ENCODE measurements at regions of chr15 and their contacts with region 1.

Region 1: DNA sequence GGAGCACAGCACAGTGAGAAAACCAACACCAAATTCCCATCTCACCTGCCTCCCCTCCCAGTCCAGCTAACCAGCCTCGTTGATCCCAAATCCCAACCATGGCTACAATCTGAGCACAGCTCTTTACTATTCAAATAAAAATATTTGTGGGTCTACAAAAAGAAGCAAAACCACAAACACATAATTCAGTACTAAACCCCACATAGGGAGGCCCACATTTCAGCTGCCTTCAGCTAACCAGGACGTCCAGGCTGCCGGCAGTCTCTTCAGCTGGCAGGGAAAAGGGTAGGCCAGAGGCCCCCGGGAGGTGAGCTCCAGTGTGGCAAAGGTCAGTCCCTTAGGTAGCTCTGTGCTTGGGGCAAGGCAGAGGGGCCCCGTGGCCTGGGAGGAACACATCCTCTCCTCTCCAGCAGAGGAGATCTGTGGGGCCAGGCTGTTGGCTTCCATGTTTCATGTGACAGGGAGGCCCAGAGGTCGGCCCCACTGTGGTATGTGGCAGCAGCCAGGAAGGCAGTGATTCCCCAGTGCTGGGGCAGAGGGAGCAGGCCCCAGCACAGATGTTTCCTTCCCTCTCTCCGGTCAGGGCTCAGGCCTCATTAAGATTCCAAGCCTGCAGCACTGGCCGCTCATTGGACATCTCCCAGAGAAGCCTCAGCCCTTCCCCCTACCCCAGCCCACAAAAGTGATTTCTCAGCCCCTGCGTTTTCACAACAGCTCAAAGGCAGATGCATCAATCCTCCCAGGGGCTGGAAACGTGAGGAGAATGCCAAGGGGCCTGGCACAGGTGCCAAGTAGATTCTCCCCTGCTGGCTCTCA is 381.4 kb downstream of the NTRK3 start:
- DNase-seq: no peak
- H3K4me3 ChIP-seq: no peak overlapping the region
- H3K27ac ChIP-seq: no peak overlapping the region
- H3K4me1 ChIP-seq: no peaks in the 10 kb centered on the region
- H3K27me3 ChIP-seq: no peaks in the 10 kb centered on the region
- CTCF ChIP-seq: no peak

Region 2: DNA sequence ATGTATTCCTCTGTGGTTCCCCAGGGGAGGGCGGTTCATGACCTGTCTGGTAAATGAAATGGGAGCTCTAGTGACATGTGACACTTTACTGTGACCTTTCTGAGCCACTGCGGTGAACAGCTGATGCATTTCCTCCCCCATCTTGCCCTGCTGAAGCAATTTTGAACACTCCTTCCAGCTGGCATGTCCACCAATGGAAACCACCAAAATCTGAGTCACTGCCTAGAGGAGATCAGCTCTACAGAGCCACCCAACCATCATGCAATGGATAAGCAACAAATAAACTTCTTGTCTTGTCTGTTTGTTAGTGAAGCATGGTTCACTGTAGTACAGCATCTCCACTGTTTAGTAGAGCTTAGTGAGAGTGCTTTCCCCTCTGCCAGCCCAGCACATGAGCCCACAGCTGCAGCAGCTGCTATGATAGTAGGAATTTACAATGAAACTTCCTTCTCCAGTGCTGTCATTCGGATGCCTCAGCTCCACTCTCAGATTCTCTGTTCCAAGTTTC is 98.0 kb before region 1 on chr15:
- dilution Hi-C with region 1: loop called (anchors 25 kb)
- DNase-seq: no peak
- H3K4me3 ChIP-seq: no peak overlapping the region
- H3K27ac ChIP-seq: no peak overlapping the region
- H3K4me1 ChIP-seq: no peaks in the 10 kb centered on the region
- H3K27me3 ChIP-seq: no peaks in the 10 kb centered on the region
- CTCF ChIP-seq: no peak

Region 3: DNA sequence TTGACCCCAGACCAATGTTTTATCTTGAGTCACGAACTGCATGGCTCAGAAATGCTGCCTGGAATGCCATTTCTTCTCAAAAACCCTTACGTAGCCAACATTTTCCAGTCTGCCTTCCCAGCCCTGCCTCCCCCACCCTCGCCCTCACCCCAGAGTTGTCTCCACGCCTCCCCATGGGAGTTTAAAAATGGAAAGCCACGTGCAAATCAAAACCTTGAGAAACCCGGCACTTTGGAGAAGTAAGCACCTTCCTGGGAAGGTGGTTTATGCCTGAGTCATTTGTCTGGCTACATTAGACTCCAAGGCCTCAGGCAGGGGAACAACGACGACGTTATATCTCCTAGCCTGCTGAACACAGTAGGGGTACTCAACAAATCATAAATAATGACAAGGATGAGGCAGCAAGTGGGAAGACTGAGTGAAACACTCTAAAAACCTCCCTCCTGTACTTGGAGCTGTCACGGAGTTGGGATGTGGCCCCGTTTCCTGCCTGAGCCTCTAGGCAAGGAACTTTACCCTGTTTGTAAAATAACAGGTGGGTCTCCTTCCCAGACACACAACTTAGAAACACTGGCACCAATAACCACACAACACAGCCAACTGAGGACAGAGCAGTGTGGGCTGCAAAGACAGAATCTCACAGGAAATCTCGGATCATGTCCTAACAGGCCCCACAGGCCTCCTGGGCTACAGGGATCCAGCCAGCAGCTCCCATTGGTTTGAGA is 202.4 kb after region 1 on chr15:
- dilution Hi-C with region 1: no loop called
- DNase-seq: no peak
- H3K4me3 ChIP-seq: no peak overlapping the region
- H3K27ac ChIP-seq: no peak overlapping the region
- H3K4me1 ChIP-seq: no peaks in the 10 kb centered on the region
- H3K27me3 ChIP-seq: no peaks in the 10 kb centered on the region
- CTCF ChIP-seq: no peak